Calu3 (cell line): ENCODE measurements at regions of chrX and their contacts with region 1.

Region 1: DNA sequence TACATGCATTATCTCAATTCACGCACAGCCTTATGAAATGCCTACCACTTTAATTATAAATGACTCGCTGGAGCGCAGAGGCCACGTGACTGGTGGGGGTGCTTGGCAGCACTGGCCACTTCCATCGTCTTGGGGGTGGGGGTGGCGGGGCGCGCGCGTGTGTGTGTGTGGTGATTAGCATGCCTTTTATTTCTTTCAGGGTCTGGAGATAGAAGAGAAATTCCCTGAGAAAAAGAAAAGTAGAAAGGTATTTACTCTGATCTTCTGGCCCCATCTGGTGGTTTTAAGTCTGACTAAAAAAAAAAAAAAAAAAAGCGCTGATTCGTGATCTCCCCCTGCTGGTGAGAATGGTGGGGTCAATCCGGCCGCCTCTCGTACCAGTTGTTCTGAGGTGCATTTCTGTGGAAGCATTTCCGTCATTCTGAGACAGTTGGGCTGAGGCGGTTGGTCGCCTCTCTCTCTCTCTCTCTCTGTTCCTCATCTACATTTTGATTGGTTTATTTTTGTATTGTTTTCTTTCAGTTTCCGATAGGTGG is at the start of gene CCNB3:
- DNase-seq: peak; percentile 62
- H3K4me3 Mint-ChIP-seq: peak within 1 kb of the TSS; percentile 58
- H3K27ac Mint-ChIP-seq: peak within 1 kb of the TSS; percentile 80
- H3K4me1 Mint-ChIP-seq: peaks cover 23% of the 10 kb centered on the region
- H3K27me3 Mint-ChIP-seq: no peaks in the 10 kb centered on the region
- CTCF ChIP-seq: peak; percentile 69
- total RNA-seq, gene CCNB3: 0.73 and 1.3 TPM in 2 replicates

Region 2: GRCh38 chrX:49915361-49916222 is 288.8 kb before region 1 on chrX:
- CTCF ChIA-PET with region 1: no interaction called
- intact Hi-C with region 1: loop called (anchors 2 kb)
- DNase-seq: peak; percentile 52
- H3K4me3 Mint-ChIP-seq: no peak overlapping the region
- H3K27ac Mint-ChIP-seq: no peak overlapping the region
- H3K4me1 Mint-ChIP-seq: no peaks in the 10 kb centered on the region
- H3K27me3 Mint-ChIP-seq: peaks cover 4% of the 10 kb centered on the region
- CTCF ChIP-seq: peak; percentile 67

Region 3: GRCh38 chrX:49922291-49923241 is 281.9 kb before region 1 on chrX and contains the start of gene CLCN5:
- CTCF ChIA-PET with region 1: no interaction called
- intact Hi-C with region 1: loop called (anchors 2 kb)
- DNase-seq: peak; percentile 96
- H3K4me3 Mint-ChIP-seq: peak within 1 kb of the TSS; percentile 81
- H3K27ac Mint-ChIP-seq: no peak within 1 kb of the TSS
- H3K4me1 Mint-ChIP-seq: peaks cover 25% of the 10 kb centered on the region
- H3K27me3 Mint-ChIP-seq: no peaks in the 10 kb centered on the region
- CTCF ChIP-seq: no peak
- total RNA-seq, gene CLCN5: 13.6 and 19.1 TPM in 2 replicates

Region 4: DNA sequence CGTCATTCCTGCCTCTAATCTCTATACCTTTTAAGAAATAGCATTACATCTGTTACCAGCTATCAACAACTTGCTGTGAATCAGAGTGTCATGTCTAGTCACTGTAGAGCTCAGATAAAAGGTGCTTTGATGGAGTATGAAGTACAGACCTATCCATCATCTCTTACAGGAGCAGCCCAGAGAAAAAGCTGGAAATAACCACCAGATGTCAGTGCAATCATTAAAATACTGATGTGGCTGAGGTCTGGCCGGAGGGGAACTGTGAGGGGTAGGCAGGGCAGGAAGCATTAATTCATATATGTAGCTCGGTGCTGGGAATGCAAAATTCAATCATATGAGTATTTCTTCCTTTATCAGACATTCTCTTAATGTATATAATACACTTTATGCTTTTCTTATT is 104.2 kb before region 1 on chrX:
- CTCF ChIA-PET with region 1: interaction called, 13 read pairs
- intact Hi-C with region 1: loop called (anchors 1 kb)
- DNase-seq: peak; percentile 28
- H3K4me3 Mint-ChIP-seq: no peak overlapping the region
- H3K27ac Mint-ChIP-seq: no peak overlapping the region
- H3K4me1 Mint-ChIP-seq: peaks cover 13% of the 10 kb centered on the region
- H3K27me3 Mint-ChIP-seq: no peaks in the 10 kb centered on the region
- CTCF ChIP-seq: no peak

Region 5: DNA sequence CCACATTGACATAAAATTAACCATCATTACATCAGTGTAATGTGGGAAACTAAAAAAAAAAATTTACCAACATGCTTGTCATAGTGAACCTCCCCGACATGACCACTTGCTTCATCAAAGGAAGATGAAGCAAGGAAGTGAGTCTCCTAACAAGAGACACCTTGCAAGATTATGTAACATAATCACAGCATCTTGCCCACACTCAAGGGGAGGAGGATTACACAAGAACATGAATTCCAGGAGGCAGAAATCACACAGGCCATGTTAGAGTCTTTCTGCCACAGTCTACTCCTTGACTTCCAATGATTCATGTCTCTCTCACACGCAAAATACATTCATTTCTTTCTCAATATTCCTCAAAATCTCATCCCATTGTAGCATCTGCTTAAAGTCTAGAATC is 97.0 kb before region 1 on chrX:
- CTCF ChIA-PET with region 1: no interaction called
- intact Hi-C with region 1: loop called (anchors 2 kb)
- DNase-seq: no peak
- H3K4me3 Mint-ChIP-seq: no peak overlapping the region
- H3K27ac Mint-ChIP-seq: peak overlapping the region; percentile 41
- H3K4me1 Mint-ChIP-seq: peaks cover 53% of the 10 kb centered on the region
- H3K27me3 Mint-ChIP-seq: no peaks in the 10 kb centered on the region
- CTCF ChIP-seq: no peak

Region 6: DNA sequence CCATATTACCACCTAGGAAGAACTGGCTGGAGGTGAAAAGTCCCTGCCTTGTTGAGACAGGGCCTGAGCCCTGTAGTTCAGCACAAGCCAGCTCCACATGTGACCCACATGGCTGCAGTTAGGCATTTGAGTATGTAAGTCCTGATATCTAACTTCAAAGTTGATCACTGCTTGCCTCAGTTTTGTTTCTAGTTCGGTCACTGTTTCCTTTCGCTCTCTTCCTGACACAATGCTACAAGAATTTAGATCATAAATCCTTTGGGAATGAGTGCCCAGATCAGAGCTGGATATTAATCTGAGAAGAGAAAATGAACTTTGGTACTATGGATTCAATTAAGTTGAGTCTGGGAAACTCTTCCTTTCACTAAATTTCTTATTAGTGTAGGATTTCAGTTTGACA is 52.0 kb before region 1 on chrX:
- CTCF ChIA-PET with region 1: no interaction called
- intact Hi-C with region 1: loop called (anchors 5 kb)
- DNase-seq: no peak
- H3K4me3 Mint-ChIP-seq: no peak overlapping the region
- H3K27ac Mint-ChIP-seq: no peak overlapping the region
- H3K4me1 Mint-ChIP-seq: peaks cover 38% of the 10 kb centered on the region
- H3K27me3 Mint-ChIP-seq: no peaks in the 10 kb centered on the region
- CTCF ChIP-seq: no peak